Activated CD4-positive, alpha-beta memory T cell treated with anti-CD3 and anti-CD28 coated beads, Interleukin-2, amount 10 ng/mL, durations not matched to agents 7 days and 5 days (primary cell): ENCODE measurements at regions of chr2 and their contacts with region 1.

Region 1: DNA sequence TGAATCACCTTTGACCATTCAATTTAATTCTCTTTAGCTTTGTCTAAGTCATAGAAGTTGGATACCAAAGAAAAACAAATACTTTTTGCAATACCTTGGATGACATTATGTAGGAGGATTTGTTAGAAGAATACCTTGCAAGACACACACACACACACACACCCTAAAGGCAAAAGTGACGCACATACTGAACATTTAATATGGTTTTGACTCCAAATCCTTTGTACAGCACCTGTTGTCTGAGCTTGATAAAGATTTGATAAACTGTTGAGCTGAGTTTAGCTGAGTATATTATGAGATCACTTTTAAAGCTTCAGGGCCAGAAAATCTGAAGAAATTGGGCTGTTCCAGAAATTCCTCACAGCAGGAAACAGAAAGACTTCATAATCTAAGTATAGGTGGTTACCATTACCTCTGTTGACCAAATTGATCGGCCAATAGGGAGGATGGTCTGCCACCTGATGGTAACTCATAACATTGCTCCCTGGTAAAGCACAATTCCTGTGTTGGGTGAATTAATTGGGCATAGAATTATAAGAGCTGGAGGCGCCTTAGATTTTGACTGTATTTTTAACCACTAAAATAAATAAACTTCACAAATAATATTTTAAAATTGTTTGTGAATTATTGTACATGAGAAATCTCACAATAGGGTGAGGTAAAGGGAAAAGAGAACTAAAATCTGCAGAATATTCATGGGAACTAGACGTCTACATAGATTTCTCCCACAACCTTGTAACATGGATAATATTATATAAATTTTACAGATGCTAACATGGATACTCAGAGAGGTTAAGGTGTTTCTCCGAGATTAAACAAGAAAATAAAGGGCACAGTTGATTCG is 21.9 kb upstream of the RPIA start:
- DNase-seq: peak; percentile 48
- H3K4me3 Mint-ChIP-seq: no peak overlapping the region
- H3K27ac Mint-ChIP-seq: no peak overlapping the region
- H3K4me1 Mint-ChIP-seq: peaks cover 4% of the 10 kb centered on the region
- H3K27me3 Mint-ChIP-seq: peaks cover 8% of the 10 kb centered on the region

Region 2: GRCh38 chr2:88590998-88591613 is 78.5 kb before region 1 on chr2:
- CTCF ChIA-PET with region 1: interaction called, 121 read pairs
- POLR2A ChIA-PET with region 1: interaction called, 5 read pairs
- DNase-seq: peak; percentile 48
- H3K4me3 Mint-ChIP-seq: no peak overlapping the region
- H3K27ac Mint-ChIP-seq: no peak overlapping the region
- H3K4me1 Mint-ChIP-seq: no peaks in the 10 kb centered on the region
- H3K27me3 Mint-ChIP-seq: no peaks in the 10 kb centered on the region

Region 3: DNA sequence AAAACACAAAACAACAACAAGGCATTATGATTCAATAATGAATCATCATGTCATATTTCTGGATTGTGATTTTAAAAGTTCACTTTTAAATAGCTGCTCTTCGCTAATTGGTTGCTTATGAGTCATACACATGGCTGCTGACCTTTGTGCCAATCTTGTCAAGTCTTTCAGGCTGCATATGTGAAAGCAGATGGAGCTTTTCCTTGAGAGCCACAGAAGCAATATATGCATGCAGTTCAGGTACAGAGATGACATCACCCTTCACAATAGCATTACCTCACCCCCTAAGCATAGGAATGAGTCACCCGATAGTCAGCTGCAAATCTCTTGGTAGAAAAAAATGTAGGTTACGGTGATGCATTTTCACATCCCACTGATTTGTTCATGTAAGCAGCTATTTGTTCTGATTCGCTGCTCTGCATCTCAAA is 69.5 kb before region 1 on chr2:
- CTCF ChIA-PET with region 1: interaction called, 14 read pairs
- POLR2A ChIA-PET with region 1: interaction called, 3 read pairs
- DNase-seq: peak; percentile 48
- H3K4me3 Mint-ChIP-seq: no peak overlapping the region
- H3K27ac Mint-ChIP-seq: no peak overlapping the region
- H3K4me1 Mint-ChIP-seq: peaks cover 28% of the 10 kb centered on the region
- H3K27me3 Mint-ChIP-seq: no peaks in the 10 kb centered on the region

Region 4: GRCh38 chr2:88659538-88659916 is 10.1 kb before region 1 on chr2:
- CTCF ChIA-PET with region 1: interaction called, 14 read pairs
- POLR2A ChIA-PET with region 1: interaction called, 3 read pairs
- DNase-seq: no peak
- H3K4me3 Mint-ChIP-seq: no peak overlapping the region
- H3K27ac Mint-ChIP-seq: no peak overlapping the region
- H3K4me1 Mint-ChIP-seq: no peaks in the 10 kb centered on the region
- H3K27me3 Mint-ChIP-seq: no peaks in the 10 kb centered on the region

Region 5: DNA sequence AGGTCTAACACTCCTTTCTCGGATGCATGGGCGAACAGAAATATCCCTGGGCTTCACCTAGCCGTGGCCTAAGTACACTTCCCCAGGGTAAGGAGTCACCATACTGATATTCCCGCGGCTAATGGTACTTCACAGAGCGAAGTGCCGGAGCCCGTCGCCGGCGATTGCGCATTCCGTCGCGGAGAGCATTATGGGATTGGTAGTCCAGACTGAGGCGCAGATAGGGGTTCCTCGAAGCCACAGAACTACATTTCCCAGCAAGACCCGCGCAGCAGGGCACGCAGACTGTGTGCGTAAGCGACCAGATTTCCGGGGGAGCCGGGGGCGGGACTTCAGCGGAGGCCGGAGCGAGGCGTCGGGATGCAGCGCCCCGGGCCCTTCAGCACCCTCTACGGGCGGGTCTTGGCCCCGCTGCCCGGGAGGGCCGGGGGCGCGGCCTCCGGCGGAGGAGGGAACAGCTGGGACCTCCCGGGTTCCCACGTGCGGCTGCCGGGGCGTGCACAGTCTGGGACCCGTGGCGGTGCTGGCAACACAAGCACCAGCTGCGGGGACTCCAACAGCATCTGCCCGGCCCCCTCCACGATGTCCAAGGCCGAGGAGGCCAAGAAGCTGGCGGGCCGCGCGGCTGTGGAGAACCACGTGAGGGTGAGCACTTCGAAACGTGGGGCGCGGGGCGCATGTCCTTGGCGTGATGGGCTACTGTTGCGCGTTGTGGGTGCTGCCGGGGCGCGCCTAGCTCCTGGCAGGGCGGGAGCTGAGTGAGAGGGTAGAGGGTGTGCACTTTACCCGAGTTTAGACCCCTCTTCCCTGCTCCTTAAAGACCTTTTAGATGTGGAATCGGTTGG is 22.0 kb after region 1 on chr2 and contains the start of gene RPIA:
- CTCF ChIA-PET with region 1: interaction called, 18 read pairs
- POLR2A ChIA-PET with region 1: interaction called, 3 read pairs
- DNase-seq: peak; percentile 99
- H3K4me3 Mint-ChIP-seq: peak within 1 kb of the TSS; percentile 93
- H3K27ac Mint-ChIP-seq: peak within 1 kb of the TSS; percentile 75
- H3K4me1 Mint-ChIP-seq: peaks cover 43% of the 10 kb centered on the region
- H3K27me3 Mint-ChIP-seq: no peaks in the 10 kb centered on the region
- total RNA-seq, gene RPIA: 27.9 to 30.1 TPM